Heart right ventricle (tissue), 16 donors: ENCODE measurements at regions of chr13 and their contacts with region 1.

Region 1: DNA sequence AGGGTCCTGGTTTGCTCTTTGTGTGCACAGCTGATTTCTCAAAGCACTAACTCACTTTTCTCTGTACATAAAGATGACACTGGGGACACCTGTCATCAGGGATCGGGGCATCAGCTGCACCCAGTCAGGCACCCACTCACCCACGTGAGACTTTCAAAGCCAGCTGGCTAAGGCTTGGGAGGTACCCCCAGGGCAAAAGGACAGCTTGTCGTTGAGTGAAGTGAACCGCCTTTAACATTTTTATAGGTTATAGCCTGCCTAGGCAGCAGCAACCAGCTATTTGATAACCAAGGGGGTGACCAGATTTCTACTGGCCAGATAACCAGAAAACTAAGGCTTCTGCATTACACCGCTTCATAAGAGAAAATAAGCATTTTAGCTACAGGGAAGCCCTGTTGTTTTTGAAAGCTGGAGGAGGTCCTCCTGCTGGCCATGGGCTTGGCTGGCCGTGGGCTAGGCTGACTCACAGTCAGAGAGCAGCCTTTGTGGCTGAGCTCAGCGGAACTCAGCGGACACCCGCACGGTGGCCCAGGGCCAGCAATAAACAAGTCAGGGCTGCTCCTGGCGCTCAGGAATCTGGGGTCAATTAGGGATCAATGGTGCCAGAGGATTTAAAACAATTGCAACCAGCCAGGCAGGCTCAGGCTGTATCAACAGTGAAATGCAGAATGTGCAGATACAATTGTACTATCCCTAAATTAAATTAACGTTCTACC is 57.1 kb downstream of the ALOX5AP start:
- DNase-seq: peak; percentile 56 to 71
- ATAC-seq: peak; percentile 81 to 91 (median 88)
- H3K4me3 ChIP-seq: no peak overlapping the region
- H3K27ac ChIP-seq: peak overlapping the region in 6 of 10 donors; percentile 21 to 75 (median 41)
- H3K4me1 ChIP-seq: peaks cover 0 to 32% (median 7%) of the 10 kb centered on the region in 9 donors
- H3K27me3 ChIP-seq: peaks cover 0 to 4% (median 0%) of the 10 kb centered on the region in 7 donors
- CTCF ChIP-seq: peak in 6 of 9 donors; percentile 14 to 43 (median 34)

Region 2: GRCh38 chr13:30679483-30680330 is 112.7 kb before region 1 on chr13:
- intact Hi-C with region 1: loop called in 1 of 10 experiments (anchors 5 kb)
- DNase-seq: no peak
- ATAC-seq: peak in 7 of 8 donors; percentile 45 to 81 (median 74)
- H3K4me3 ChIP-seq: no peak overlapping the region
- H3K27ac ChIP-seq: no peak overlapping the region
- H3K4me1 ChIP-seq: peaks cover 0 to 19% (median 0%) of the 10 kb centered on the region in 9 donors
- H3K27me3 ChIP-seq: no peaks in the 10 kb centered on the region
- CTCF ChIP-seq: peak in 8 of 9 donors; percentile 12 to 70 (median 58)

Region 3: GRCh38 chr13:30739761-30740642 is 52.4 kb before region 1 on chr13:
- intact Hi-C with region 1: loop called in 1 of 10 experiments (anchors 10 kb)
- DNase-seq: no peak
- ATAC-seq: no peak
- H3K4me3 ChIP-seq: peak overlapping the region in 2 of 10 donors; percentile 1 to 44
- H3K27ac ChIP-seq: peak overlapping the region in 2 of 10 donors; percentile 10 to 83
- H3K4me1 ChIP-seq: peaks cover 0 to 91% (median 9%) of the 10 kb centered on the region in 9 donors
- H3K27me3 ChIP-seq: peaks cover 0 to 3% (median 0%) of the 10 kb centered on the region in 7 donors
- CTCF ChIP-seq: no peak